Posterior cingulate gyrus (tissue), 11 donors: ENCODE measurements at regions of chr3 and their contacts with region 1.

Region 1: GRCh38 chr3:47324278-47324865 is 41.6 kb downstream of the KLHL18 start:
- DNase-seq: peak in 6 of 10 donors; percentile 27 to 88 (median 56)

Region 2: GRCh38 chr3:46923559-46924350 is 400.6 kb before region 1 on chr3:
- intact Hi-C with region 1: loop called (anchors 5 kb)
- DNase-seq: peak in 5 of 10 donors; percentile 41 to 87 (median 48)

Region 3: DNA sequence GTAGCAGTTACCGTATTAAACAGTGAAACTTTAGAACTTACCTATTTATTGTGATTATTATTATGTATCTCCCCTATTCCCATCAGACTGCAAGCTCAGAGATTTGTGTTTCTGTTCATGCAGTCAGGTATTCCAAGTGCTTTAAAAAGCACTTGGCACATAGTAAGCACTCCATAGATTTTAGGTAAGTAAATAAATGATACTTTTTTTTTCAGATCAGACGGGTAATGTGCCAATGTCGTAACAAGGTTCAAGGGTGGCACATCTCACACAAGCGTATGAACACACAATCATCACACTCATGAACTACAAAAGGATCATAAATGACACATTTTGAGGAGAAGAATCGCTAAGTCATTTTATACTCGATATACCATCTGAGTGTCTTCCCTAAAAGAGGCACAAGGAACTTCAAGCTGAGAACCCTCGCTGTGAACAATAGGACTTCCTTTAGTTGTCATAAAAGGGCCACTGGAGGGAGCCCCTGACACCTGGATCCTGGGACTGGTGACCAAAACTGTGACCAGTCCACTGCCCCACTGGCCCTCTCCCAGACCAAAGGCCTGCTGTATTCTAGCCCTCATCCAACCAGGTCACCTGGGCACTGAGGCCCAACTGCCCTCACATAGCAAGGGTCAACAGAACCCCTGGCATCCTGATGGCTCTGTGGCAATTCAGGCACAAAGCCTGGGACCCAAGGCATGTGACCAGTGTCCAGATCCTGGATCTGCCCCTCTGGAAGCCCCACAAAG is 73.9 kb before region 1 on chr3:
- intact Hi-C with region 1: loop called (anchors 2 kb)
- DNase-seq: peak in 4 of 10 donors; percentile 11 to 85 (median 25)